ENCODE measurements at regions of chr2 and their contacts with region 1.

Region 1: DNA sequence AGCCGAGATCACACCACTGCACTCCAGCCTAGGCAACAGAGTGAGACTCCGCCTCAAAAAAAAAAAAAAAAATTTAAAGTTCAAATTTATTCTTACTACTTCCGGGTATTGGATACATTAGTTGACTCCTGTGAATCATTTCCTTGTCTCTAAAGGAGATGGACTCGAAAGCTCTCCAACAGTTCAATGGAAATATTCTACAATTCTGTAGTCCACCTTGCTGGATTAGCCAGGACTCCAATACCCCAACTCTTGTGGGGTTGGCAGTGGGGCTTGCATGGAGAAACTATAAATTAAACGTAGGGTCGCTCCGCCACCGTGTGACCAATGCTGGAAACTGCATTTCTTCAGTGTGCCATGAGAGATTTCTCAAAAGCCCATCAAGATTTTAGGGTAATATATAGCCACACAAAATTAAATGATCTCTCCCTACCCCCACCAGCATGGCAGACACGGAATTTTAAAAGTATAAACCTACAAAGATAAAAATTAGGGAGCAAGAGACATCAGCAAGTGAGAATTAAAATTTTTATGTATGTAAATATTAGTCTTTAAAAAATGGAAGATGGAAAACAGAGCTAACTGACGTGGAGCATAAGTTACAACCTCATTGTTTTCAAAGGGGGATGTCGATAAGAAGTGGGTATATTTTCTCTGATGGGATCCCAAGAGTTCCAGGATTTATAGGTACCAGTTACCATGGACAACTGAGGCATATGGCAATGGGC is 27.8 kb upstream of the GAREM2 start:
- DNase-seq: peak; percentile 55
- ATAC-seq: peak; percentile 84
- H3K4me3 ChIP-seq: no peak overlapping the region
- H3K27ac ChIP-seq: no peak overlapping the region
- H3K4me1 ChIP-seq: no peaks in the 10 kb centered on the region
- H3K27me3 ChIP-seq: peaks cover 5% of the 10 kb centered on the region
- CTCF ChIP-seq: peak; percentile 85
- POLR2A ChIP-seq: no peak
- RAD21 ChIP-seq: peak; percentile 83

Region 2: GRCh38 chr2:25851740-25852503 is 293.2 kb before region 1 on chr2:
- CTCF ChIA-PET with region 1: no interaction called
- POLR2A ChIA-PET with region 1: no interaction called
- dilution Hi-C with region 1: no loop called
- in situ Hi-C with region 1: loop called (anchors 10 kb)
- intact Hi-C with region 1: loop called (anchors 2 kb)
- DNase-seq: peak; percentile 93
- ATAC-seq: peak; percentile 92
- H3K4me3 ChIP-seq: no peak overlapping the region
- H3K27ac ChIP-seq: peak overlapping the region; percentile 66
- H3K4me1 ChIP-seq: peaks cover 5% of the 10 kb centered on the region
- H3K27me3 ChIP-seq: no peaks in the 10 kb centered on the region
- CTCF ChIP-seq: peak; percentile 74
- POLR2A ChIP-seq: no peak
- RAD21 ChIP-seq: peak; percentile 71

Region 3: GRCh38 chr2:25991965-25992364 is 153.2 kb before region 1 on chr2:
- CTCF ChIA-PET with region 1: interaction called, 4 read pairs
- POLR2A ChIA-PET with region 1: no interaction called
- dilution Hi-C with region 1: no loop called
- in situ Hi-C with region 1: loop called (anchors 5 kb)
- intact Hi-C with region 1: loop called (anchors 1 kb)
- DNase-seq: no peak
- ATAC-seq: no peak
- H3K4me3 ChIP-seq: no peak overlapping the region
- H3K27ac ChIP-seq: no peak overlapping the region
- H3K4me1 ChIP-seq: no peaks in the 10 kb centered on the region
- H3K27me3 ChIP-seq: peaks cover 2% of the 10 kb centered on the region; the same call in 1 of the 2 replicates
- CTCF ChIP-seq: no peak
- POLR2A ChIP-seq: no peak
- RAD21 ChIP-seq: no peak

Region 4: DNA sequence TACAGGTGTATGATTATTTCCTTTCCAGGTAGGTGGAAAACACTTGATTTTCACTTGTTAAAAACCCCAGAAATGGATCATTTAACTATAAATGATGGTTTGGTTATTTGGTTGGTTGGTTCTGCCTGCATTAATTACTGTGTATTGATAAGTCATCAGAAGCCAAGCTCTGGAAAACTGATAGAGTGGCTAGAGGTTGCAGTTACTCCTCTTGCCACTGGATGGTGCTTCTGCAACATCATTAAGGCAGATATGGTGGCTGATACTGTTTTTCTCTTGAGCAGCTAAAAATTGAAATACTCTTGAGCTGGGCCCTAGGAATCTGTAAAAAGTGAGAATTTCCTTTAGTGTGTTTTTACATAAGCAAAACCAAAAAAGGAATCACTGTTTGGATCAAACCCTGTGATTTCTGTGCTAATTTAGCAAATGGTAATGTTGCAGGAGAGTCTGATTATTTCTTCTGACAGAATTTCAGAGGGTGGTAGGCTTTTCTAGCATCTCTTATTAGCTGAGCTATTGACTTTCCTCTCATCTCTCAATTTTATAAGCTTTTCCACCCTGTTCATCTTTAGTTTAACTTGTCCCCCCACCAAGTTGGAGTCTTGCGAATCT is 57.0 kb before region 1 on chr2:
- CTCF ChIA-PET with region 1: interaction called, 3 read pairs
- POLR2A ChIA-PET with region 1: no interaction called
- dilution Hi-C with region 1: no loop called
- in situ Hi-C with region 1: no loop called
- intact Hi-C with region 1: loop called (anchors 1 kb)
- DNase-seq: peak; percentile 36
- ATAC-seq: peak; percentile 82
- H3K4me3 ChIP-seq: no peak overlapping the region
- H3K27ac ChIP-seq: no peak overlapping the region
- H3K4me1 ChIP-seq: no peaks in the 10 kb centered on the region; the same call in 1 of the 2 replicates
- H3K27me3 ChIP-seq: no peaks in the 10 kb centered on the region
- CTCF ChIP-seq: peak; percentile 63
- POLR2A ChIP-seq: no peak
- RAD21 ChIP-seq: peak; percentile 64

Region 5: DNA sequence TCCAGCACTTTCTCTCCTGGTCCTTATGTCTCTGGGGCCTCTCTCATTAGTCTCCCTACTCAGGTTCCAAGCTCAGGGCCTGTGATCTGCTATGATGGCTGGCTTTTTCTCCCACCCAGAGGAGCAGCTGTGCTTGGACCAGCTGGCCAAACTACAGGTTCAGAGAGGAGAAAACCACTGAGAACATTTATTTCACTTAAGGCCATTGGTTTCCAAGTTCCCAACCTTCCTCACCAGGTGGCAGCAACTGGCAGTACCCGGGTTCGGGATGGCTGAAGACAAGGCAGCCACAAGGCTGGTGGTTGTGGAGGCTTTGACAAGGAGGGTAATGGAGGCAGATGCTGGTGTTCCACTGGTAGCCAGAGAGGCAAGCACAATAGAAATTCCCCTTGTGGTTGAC is 170.9 kb after region 1 on chr2:
- CTCF ChIA-PET with region 1: no interaction called
- POLR2A ChIA-PET with region 1: no interaction called
- dilution Hi-C with region 1: no loop called
- in situ Hi-C with region 1: no loop called
- intact Hi-C with region 1: no loop called
- DNase-seq: no peak
- ATAC-seq: no peak
- H3K4me3 ChIP-seq: no peak overlapping the region
- H3K27ac ChIP-seq: no peak overlapping the region
- H3K4me1 ChIP-seq: no peaks in the 10 kb centered on the region
- H3K27me3 ChIP-seq: peaks cover 39% of the 10 kb centered on the region
- CTCF ChIP-seq: no peak
- POLR2A ChIP-seq: no peak
- RAD21 ChIP-seq: no peak

Measured in IMR-90 (cell line).